Tibial artery (tissue), 4 donors: ENCODE measurements at regions of chr15 and their contacts with region 1.

Region 1: GRCh38 chr15:56918046-56918938 is at the start of gene TCF12:
- DNase-seq: peak; percentile 94 to 96
- H3K4me3 ChIP-seq: peak within 1 kb of the TSS; percentile 79 to 91
- H3K27ac ChIP-seq: peak within 1 kb of the TSS; percentile 91 to 92
- H3K4me1 ChIP-seq: peaks cover 0 to 65% (median 16%) of the 10 kb centered on the region in 4 donors
- H3K27me3 ChIP-seq: no peaks in the 10 kb centered on the region
- CTCF ChIP-seq: peak; percentile 16 to 34

Region 2: DNA sequence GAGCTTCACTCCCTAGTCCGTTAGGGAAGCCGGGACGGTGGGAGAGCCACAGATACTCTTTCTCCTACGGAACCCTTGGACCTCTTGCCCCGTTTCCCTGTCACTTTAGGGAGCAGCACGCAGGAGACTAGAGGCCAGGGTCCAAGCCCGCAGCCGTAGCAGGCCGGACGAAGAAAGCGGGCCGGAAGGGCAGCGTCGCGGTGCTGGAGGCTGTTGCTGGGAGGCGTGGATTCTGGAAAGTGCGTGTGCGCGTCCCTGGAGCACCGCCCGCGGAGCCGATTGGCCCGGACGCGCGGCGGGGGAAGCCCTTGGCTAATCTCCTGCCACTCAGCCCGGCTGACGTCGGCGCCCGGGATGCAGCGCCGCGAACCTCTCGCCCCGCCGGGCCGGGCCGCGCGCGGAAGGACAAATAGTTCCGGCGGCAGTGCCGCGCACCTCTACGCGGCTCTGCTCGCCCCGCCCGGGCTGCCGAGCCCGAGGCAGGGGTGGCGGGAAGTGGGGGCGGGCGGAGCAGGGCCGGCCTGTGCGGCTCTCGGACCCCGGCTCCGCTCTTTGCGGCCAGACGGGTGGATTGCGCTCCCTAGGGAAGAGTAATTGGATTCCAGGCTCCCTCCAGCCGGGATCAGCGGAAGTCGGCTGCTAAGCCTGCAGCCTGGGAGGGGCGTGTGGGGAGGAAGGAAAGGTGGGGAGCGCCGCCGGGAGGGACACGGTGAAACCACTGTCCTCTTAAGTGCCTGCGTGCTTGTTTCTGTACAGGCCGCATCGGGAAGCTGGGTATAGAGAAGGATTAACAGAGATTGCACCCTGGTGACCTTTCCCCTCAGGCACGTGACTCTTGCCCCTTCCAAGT is 31.1 kb before region 1 on chr15:
- intact Hi-C with region 1: loop called (anchors 1 kb)
- DNase-seq: peak; percentile 91 to 97
- H3K4me3 ChIP-seq: peak overlapping the region; percentile 65 to 79
- H3K27ac ChIP-seq: peak overlapping the region; percentile 92 to 95
- H3K4me1 ChIP-seq: peaks cover 0 to 21% (median 10%) of the 10 kb centered on the region in 4 donors
- H3K27me3 ChIP-seq: no peaks in the 10 kb centered on the region
- CTCF ChIP-seq: no peak

Region 3: DNA sequence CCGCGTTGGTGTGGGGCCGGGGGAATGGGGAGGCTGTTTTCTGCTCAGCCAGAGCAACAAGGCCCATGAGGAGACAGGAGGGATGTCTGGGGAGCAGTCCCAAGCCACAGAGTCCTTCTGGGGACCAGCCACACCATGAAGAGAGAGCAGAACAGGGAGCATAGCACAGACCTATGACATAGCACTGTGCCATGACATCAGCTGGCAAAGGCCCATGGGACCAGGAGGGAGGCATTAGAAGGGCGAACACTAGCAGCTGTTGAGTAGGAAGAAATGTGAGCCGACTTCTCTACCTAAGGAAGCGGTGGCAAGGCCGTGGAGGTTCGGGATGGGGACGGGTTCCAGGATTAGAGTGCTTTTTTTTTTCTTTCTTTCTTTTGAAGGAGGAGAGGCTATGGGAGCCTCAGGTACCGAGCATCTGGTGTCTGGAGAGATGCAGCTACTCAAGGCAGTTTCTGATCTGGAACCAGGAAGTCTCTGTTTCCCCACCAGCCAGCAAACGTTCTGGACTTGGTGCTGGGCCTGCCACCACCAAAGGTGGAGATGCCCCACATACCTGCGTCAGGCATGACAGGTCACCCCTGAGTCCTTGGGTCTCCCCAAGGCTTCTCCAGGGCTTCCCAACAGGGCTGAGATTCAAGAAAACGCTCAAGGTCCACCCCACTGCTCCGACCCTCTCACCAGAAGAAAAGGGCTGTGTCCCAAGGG is 380.7 kb after region 1 on chr15:
- intact Hi-C with region 1: loop called (anchors 10 kb)
- DNase-seq: no peak
- H3K4me3 ChIP-seq: no peak overlapping the region
- H3K27ac ChIP-seq: no peak overlapping the region
- H3K4me1 ChIP-seq: peaks cover 0 to 5% (median 0%) of the 10 kb centered on the region in 4 donors
- H3K27me3 ChIP-seq: no peaks in the 10 kb centered on the region
- CTCF ChIP-seq: no peak